ENCODE measurements at regions of chr2 and their contacts with region 1.

Region 1: DNA sequence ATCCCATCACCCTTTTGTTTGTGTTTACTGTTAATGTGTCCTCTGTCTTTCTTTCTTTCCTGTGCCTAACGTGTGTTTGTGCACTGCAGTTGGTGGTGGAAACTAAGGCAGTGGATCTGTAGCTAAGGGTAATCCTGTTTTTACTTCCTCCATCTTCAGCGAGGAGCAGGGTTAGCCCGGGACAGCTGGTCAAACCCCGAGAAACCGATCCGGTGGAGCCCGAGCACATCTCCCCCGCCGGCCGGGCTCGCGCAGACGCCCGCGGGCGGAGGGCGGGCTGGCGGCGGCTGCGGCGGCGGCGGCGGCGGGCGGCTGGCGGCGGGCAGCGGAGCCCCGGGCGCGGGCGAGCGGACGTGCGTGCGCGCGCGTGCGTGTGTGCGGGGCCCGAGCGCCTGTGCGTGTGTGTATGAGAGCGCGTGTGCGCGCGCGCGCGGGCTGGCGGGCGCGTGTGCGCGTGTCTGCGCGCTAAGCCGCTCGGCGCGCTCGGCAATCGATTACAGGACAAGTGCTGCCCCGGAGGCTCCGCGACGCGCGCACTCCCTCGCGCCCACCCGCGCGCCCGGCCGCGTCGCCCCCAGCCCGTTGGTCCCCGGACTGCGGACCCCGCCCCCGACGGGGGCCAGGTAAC is at the start of gene IKZF2:
- DNase-seq: peak; percentile 75
- CTCF ChIP-seq: no peak

Region 2: GRCh38 chr2:212777020-212777491 is 374.5 kb before region 1 on chr2:
- CTCF ChIA-PET with region 1: interaction called, 21 read pairs
- POLR2A ChIA-PET with region 1: no interaction called
- DNase-seq: peak; percentile 25
- CTCF ChIP-seq: peak; percentile 39

Region 3: GRCh38 chr2:213021971-213022899 is 129.3 kb before region 1 on chr2:
- CTCF ChIA-PET with region 1: interaction called, 10 read pairs
- POLR2A ChIA-PET with region 1: interaction called, 7 read pairs
- DNase-seq: peak; percentile 28
- CTCF ChIP-seq: no peak

Region 4: GRCh38 chr2:213166109-213166508 is 14.6 kb after region 1 on chr2:
- CTCF ChIA-PET with region 1: interaction called, 32 read pairs
- POLR2A ChIA-PET with region 1: interaction called, 3 read pairs
- DNase-seq: peak; percentile 39
- CTCF ChIP-seq: no peak

Region 5: GRCh38 chr2:213175526-213176162 is 24.1 kb after region 1 on chr2:
- CTCF ChIA-PET with region 1: interaction called, 32 read pairs
- POLR2A ChIA-PET with region 1: no interaction called
- DNase-seq: no peak
- CTCF ChIP-seq: no peak

Measured in GM10248 (cell line).